ENCODE measurements at regions of chr1 and their contacts with region 1.

Region 1: GRCh38 chr1:153612755-153613331 is at the start of gene S100A16:
- DNase-seq: peak; percentile 92 to 94
- H3K4me3 ChIP-seq: peak within 1 kb of the TSS; percentile 3 to 74 (median 59)
- H3K27ac ChIP-seq: peak within 1 kb of the TSS; percentile 89 to 93 (median 91)
- H3K4me1 ChIP-seq: peaks cover 77 to 90% of the 10 kb centered on the region in 2 donors
- H3K27me3 ChIP-seq: no peaks in the 10 kb centered on the region
- CTCF ChIP-seq: peak in 1 of 6 experiments; percentile 24
- POLR2A ChIP-seq: peak; percentile 51 to 91
- total RNA-seq, gene S100A16: 62.7 to 104 (median 76.3) TPM

Region 2: DNA sequence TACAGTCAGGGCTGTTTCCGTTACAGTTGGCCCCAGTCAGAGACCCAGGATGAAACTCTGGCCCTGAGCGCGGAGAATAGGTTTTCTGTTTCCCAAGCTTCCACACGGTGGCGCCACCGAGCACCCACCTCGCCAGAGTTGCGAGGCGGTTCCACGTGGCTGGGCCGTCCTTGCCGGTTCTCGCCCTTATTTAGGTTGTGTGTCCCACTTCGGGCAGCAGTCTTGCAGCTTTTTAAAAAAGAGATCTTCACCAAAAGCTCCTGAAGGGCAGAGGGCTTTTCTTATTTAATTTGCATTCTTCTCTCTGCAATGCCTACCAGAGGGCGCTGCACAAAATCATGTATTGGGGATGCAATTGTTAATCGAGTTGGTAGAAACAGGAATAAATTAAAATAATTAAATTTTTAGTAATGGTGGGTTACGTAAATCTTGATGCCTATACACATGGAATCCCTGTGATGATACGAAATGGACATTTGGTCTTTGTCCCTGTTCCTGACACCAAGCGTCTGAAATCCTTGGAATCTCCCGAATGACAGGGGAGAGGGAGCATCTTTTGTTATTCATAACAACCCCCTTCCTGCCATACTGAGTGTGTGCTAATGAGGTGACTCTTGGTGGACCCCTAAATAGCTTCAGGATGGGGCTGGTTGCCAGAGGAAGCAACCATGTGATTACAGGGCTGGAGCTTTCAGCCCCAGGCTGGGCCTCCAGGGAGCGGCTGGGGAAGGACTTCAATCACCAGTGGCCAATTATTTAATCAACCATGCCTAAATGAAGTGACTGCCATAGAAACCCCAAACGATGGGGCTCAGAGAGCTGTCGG is 146.8 kb before region 1 on chr1:
- intact Hi-C with region 1: no loop called
- DNase-seq: peak; percentile 39 to 61
- H3K4me3 ChIP-seq: no peak overlapping the region
- H3K27ac ChIP-seq: no peak overlapping the region
- H3K4me1 ChIP-seq: peaks cover 0 to 3% of the 10 kb centered on the region in 2 donors
- H3K27me3 ChIP-seq: peaks cover 4% of the 10 kb centered on the region
- CTCF ChIP-seq: peak; percentile 52 to 86 (median 66)
- POLR2A ChIP-seq: no peak

Region 3: DNA sequence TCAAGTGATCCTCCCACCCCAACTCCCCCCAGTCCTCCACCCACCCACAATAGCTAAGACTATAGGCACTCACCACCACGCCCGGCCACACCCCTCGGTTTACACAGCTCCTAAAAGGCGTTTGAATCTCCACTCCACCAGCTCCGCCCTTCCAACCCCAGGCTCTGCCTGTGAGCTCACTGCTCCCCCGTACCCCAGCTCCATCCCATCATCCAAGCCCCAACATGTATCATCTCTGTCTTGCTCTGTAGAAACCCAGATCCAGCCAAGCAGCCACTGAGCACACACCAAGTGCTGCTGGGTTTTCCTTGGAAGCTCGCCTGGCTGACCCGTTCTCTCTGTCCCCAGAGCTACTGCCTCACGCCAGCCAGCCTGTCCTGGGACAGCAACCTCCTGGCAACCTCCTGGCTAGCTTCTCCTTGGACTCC is 35.2 kb before region 1 on chr1:
- intact Hi-C with region 1: loop called (anchors 5 kb)
- DNase-seq: no peak
- H3K4me3 ChIP-seq: no peak overlapping the region
- H3K27ac ChIP-seq: no peak overlapping the region
- H3K4me1 ChIP-seq: peaks cover 4 to 6% of the 10 kb centered on the region in 2 donors
- H3K27me3 ChIP-seq: no peaks in the 10 kb centered on the region
- CTCF ChIP-seq: no peak
- POLR2A ChIP-seq: no peak

Region 4: DNA sequence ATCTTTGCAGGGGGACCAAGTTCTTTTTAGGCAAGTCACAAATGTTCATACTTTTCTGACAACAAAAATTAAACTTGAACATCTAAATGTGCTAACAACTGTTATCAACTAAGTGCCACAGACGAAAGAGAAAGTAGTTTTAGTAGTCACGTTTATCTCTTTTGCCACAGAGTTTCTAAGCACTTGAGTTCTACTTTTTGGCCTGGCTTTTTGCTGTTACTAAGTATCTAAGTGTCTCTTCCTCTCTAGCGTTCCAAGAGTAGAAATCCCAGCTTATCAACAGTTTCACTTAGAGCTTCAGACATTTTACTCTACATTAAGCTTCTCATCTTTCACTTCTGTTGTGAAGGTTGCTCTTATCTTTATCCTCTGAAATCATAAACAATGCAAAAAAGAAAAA is 275.7 kb after region 1 on chr1:
- intact Hi-C with region 1: no loop called
- DNase-seq: no peak
- H3K4me3 ChIP-seq: no peak overlapping the region
- H3K27ac ChIP-seq: peak overlapping the region in 1 of 3 donors; percentile 24
- H3K4me1 ChIP-seq: peaks cover 0 to 26% of the 10 kb centered on the region in 2 donors
- H3K27me3 ChIP-seq: no peaks in the 10 kb centered on the region
- CTCF ChIP-seq: no peak
- POLR2A ChIP-seq: no peak